CD4-positive, alpha-beta memory T cell (primary cell): ENCODE measurements at regions of chr15 and their contacts with region 1.

Region 1: DNA sequence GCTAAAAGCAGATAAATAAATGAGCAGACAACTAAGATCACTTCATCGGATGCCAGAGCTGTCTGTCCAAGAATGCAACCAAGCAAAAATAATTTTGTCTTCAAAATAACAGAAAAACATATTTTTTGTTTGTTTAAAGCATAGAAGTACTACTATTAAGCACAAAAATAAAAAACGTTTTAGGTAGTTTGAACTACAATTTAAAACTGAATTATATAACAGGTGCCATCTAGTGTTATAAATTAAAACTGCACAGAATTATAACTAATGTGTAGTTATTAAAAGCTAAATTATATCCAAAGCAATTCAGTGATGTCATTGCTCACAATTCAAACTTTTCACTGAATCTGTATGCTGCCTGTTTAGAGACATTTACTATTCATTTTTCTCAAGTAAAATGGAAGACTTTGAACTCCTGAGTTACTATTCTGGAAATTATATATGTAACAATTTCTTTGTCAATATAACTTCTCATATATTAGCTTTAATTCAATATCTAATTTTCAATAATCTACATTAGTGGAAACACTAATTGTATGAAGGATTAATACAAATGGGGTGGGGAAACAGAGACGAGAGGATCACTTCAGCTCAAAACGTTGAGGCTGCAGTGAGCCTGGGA is 29.5 kb downstream of the LINS1 start:
- DNase-seq: peak in 4 of 5 donors; percentile 35 to 41 (median 36)
- H3K4me3 ChIP-seq: no peak overlapping the region
- H3K4me3 Mint-ChIP-seq: peak overlapping the region in 7 of 8 donors; percentile 77 to 88 (median 84)
- H3K27ac ChIP-seq: peak overlapping the region; percentile 37
- H3K27ac Mint-ChIP-seq: peak overlapping the region in 5 of 7 donors; percentile 81 to 95 (median 94)
- H3K4me1 ChIP-seq: peaks cover 31% of the 10 kb centered on the region
- H3K4me1 Mint-ChIP-seq: peaks cover 32 to 58% (median 42%) of the 10 kb centered on the region in 4 donors
- H3K27me3 ChIP-seq: no peaks in the 10 kb centered on the region
- H3K27me3 Mint-ChIP-seq: no peaks in the 10 kb centered on the region

Region 2: DNA sequence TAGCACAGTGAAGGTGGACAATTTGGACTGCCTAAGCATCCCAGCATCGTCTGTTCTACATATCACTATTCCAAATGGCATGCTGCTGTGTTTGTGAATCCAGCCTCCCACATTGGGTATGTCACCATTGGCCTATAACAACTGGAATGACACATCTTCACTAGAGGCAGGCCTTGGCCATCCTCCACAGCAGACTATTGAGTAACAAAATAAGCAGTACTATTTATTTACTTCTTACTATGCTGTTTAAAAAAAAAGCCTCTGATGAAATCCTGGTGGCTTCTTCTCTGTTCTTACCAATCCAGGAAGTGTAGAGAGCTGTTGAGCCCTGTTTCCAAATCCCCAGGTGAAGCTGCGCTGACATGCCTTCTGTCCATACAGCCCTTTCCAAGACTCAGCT is 13.1 kb before region 1 on chr15:
- CTCF ChIA-PET with region 1: interaction called, 16 read pairs
- POLR2A ChIA-PET with region 1: interaction called, 3 read pairs
- intact Hi-C with region 1: no loop called
- DNase-seq: no peak
- H3K4me3 ChIP-seq: no peak overlapping the region
- H3K4me3 Mint-ChIP-seq: no peak overlapping the region
- H3K27ac ChIP-seq: no peak overlapping the region
- H3K27ac Mint-ChIP-seq: peak overlapping the region in 6 of 7 donors; percentile 1 to 72 (median 35)
- H3K4me1 ChIP-seq: no peaks in the 10 kb centered on the region
- H3K4me1 Mint-ChIP-seq: peaks cover 0 to 6% (median 4%) of the 10 kb centered on the region in 4 donors
- H3K27me3 ChIP-seq: no peaks in the 10 kb centered on the region
- H3K27me3 Mint-ChIP-seq: no peaks in the 10 kb centered on the region

Region 3: DNA sequence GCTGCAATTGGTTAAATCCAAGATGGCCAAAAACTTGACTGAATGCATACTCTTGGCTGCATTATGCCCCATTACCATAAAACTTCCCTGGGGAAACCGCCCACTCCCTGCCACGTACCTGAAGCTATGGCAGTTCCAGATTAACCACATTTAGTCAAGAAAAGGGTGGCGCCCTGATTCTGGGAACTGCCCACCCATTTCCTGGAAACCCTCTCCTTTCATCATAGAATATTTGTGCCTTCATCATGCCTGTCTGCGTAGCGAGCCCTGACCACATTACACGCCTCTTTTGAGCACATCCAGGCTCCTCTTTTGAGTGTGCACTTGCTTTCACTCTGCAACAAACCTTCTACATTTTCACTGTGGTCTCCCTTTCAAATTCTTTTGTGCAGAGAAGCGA is 24.3 kb after region 1 on chr15:
- CTCF ChIA-PET with region 1: interaction called, 14 read pairs
- POLR2A ChIA-PET with region 1: interaction called, 6 read pairs
- intact Hi-C with region 1: loop called (anchors 2 kb)
- DNase-seq: peak; percentile 88 to 95 (median 92)
- H3K4me3 ChIP-seq: peak overlapping the region; percentile 48 to 59
- H3K4me3 Mint-ChIP-seq: peak overlapping the region; percentile 75 to 91 (median 86)
- H3K27ac ChIP-seq: peak overlapping the region; percentile 77
- H3K27ac Mint-ChIP-seq: peak overlapping the region in 6 of 7 donors; percentile 90 to 98 (median 96)
- H3K4me1 ChIP-seq: peaks cover 87% of the 10 kb centered on the region
- H3K4me1 Mint-ChIP-seq: peaks cover 52 to 71% (median 58%) of the 10 kb centered on the region in 4 donors
- H3K27me3 ChIP-seq: no peaks in the 10 kb centered on the region
- H3K27me3 Mint-ChIP-seq: no peaks in the 10 kb centered on the region